ENCODE measurements at regions of chr4 and their contacts with region 1.

Region 1: DNA sequence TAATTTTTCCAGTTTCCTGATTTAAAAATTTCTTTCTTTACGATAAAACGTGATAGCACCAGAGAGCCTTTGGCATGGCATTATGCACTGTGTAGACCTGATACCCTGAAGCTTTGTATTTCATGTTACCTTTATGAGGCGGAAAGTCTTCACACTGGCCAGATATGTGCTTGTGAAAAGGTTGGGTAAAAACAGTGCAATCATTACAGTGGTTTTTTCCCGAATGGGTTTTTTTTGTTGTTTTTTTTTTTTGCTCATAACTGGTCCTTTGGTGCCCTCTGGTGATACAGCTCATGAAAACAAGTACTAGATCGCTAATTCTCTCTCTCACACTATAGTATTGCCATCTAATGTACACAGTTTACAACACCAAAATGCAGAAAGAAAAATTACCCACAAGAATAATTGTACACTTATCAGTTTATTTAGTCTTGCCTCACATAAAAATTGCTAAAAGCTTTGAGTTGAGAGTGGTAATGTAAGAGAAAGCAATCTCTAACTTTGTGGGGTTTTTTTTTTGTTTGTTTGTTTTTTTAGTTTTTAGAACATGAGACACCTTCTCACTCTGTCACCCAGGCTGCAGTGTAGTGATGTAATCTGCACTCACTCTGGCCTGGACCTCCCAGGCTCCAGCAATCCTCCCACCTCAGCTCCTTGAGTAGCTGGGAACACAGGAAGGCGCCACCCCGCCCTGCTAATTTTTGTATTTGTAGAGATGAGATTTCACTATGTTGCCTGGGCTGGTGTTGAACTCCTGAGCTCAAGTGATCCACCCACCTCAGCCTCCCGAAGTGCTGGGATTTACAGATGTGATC is 21.3 kb downstream of the SPCS3 start:
- DNase-seq: peak in 4 of 14 experiments; percentile 35 to 70 (median 53)
- ATAC-seq: peak; percentile 56
- H3K4me3 ChIP-seq: no peak overlapping the region
- H3K4me3 Mint-ChIP-seq: no peak overlapping the region
- H3K27ac ChIP-seq: no peak overlapping the region
- H3K27ac Mint-ChIP-seq: peak overlapping the region; percentile 4
- H3K4me1 ChIP-seq: no peaks in the 10 kb centered on the region
- H3K4me1 Mint-ChIP-seq: peaks cover 10% of the 10 kb centered on the region
- H3K27me3 ChIP-seq: no peaks in the 10 kb centered on the region
- H3K27me3 Mint-ChIP-seq: no peaks in the 10 kb centered on the region
- CTCF ChIP-seq: peak; percentile 81

Region 2: DNA sequence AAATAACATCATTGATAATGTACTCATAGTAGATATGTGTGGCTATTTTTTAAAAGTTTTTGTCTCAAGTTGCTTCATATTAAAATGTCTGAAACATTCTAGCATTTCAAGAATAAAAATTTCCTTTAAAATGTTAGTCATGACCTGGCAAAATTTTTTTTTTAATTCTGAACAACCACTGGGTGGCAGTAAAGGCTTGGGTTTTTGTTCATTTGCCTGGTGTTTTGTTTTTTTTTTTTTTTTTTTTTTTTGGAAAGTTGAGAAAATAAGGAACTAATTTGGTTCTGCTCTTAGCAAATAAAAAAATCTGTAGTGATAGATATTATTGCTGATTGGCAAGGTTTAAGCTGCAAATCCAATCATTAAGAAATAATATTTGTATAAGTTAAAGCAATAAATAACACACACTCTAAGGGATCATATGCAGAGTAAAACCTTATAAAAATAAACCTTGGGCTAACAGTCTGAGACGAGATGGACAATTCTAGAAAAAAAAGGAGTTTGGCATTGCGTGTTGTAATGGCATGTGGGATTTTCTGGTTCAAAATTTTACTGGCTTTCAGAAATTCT is 1976.0 kb before region 1 on chr4:
- CTCF ChIA-PET with region 1: no interaction called
- POLR2A ChIA-PET with region 1: no interaction called
- intact Hi-C with region 1: loop called in 1 of 2 experiments (anchors 10 kb)
- DNase-seq: peak in 4 of 14 experiments; percentile 12 to 56 (median 36)
- ATAC-seq: no peak
- H3K4me3 ChIP-seq: no peak overlapping the region
- H3K4me3 Mint-ChIP-seq: no peak overlapping the region
- H3K27ac ChIP-seq: no peak overlapping the region
- H3K27ac Mint-ChIP-seq: no peak overlapping the region
- H3K4me1 ChIP-seq: no peaks in the 10 kb centered on the region
- H3K4me1 Mint-ChIP-seq: no peaks in the 10 kb centered on the region
- H3K27me3 ChIP-seq: no peaks in the 10 kb centered on the region
- H3K27me3 Mint-ChIP-seq: peaks cover 9% of the 10 kb centered on the region
- CTCF ChIP-seq: peak; percentile 66

Region 3: DNA sequence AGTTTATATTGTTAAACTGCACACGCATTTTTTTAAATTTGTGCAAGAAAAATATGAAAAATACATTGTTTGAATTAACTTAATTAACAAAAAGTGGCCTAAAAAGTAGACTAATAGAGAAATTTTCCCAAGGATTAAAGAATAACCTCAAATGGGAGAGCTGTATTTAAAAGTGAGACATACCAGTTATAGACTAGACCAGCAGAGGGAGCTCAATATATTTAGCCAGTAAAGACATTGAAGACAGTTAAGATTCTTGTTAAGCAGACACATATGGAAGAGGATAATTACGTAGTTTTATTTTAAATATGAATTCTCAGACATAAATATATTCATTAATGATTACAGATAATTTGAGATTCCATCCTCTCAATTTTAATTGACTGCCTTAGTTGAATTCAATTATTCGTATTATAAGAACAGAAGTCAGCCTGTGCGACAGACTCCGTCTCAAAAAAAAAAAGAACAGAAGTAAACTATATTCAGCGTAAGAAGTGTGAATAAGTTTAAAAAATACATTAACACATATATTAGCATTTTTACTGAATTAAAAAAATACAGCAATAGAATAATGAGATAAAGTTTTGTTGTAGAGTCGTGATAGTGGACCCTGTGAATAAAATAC is 1576.9 kb before region 1 on chr4:
- CTCF ChIA-PET with region 1: no interaction called
- POLR2A ChIA-PET with region 1: no interaction called
- intact Hi-C with region 1: loop called in 1 of 2 experiments (anchors 5 kb)
- DNase-seq: peak in 3 of 14 experiments; percentile 1 to 18 (median 11)
- ATAC-seq: no peak
- H3K4me3 ChIP-seq: no peak overlapping the region
- H3K4me3 Mint-ChIP-seq: no peak overlapping the region
- H3K27ac ChIP-seq: no peak overlapping the region
- H3K27ac Mint-ChIP-seq: no peak overlapping the region
- H3K4me1 ChIP-seq: no peaks in the 10 kb centered on the region
- H3K4me1 Mint-ChIP-seq: no peaks in the 10 kb centered on the region
- H3K27me3 ChIP-seq: no peaks in the 10 kb centered on the region
- H3K27me3 Mint-ChIP-seq: no peaks in the 10 kb centered on the region
- CTCF ChIP-seq: peak; percentile 18

Region 4: DNA sequence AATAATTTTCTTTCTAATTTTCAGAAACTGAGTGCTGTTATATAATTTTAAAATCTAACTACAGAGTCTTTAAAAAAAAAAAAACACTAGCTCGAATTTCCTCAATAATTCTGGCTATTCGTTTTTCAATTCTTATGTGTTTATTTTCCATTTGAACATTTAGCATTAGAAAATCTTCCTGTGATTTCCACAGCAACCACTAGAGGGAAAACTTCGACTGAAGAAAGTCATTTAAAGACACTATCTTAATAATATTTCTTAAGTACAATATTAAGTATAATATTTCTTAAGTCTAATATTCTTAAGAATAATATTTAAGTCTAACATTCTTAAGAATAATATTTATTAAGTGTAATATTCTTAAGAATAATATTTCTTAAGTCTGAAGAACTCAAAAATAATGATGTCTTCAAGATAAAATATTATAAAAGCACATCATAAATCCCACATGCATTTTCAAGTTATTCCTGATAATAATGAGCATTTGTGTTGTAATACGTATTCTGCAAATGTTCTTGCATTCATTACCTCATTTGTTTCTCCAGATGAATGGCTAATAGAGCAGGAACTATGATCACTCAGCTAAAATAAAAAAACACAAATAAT is 393.9 kb before region 1 on chr4:
- CTCF ChIA-PET with region 1: interaction called, 3 read pairs
- POLR2A ChIA-PET with region 1: no interaction called
- intact Hi-C with region 1: loop called (anchors 1 to 2 kb)
- DNase-seq: peak in 3 of 14 experiments; percentile 13 to 22 (median 15)
- ATAC-seq: no peak
- H3K4me3 ChIP-seq: no peak overlapping the region
- H3K4me3 Mint-ChIP-seq: no peak overlapping the region
- H3K27ac ChIP-seq: no peak overlapping the region
- H3K27ac Mint-ChIP-seq: no peak overlapping the region
- H3K4me1 ChIP-seq: peaks cover 5% of the 10 kb centered on the region
- H3K4me1 Mint-ChIP-seq: peaks cover 6% of the 10 kb centered on the region
- H3K27me3 ChIP-seq: peaks cover 0 to 3% of the 10 kb centered on the region in 2 experiments
- H3K27me3 Mint-ChIP-seq: peaks cover 21% of the 10 kb centered on the region
- CTCF ChIP-seq: peak; percentile 64

Region 5: DNA sequence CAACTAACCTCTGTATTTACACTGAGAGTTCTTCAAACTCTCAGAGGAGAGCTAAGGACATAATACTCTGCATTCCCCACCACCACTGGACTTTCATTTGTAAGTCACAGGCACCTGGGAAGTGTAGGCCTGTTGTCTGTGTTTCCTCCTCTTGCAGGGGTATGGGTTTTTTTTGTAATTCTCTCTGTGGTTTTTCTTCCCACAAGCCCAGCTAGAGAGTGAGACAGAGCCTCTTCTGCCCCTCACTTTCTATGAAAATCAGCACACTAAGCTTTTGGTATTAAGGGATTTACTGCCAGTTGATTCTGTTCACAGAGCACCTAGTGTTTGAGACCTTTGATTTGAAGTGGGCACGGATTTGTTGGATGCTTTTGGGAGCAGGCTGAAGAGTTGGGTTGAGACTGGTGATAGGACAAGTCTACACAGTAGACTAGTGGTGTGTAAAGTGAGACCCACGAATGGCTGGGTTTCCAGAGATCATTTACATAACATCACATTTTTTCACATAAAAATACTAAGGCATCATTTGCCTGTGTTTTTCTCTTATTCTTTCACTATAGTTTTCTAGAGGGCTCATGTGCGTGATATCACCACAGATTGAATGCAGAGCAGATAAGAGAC is 304.4 kb before region 1 on chr4:
- CTCF ChIA-PET with region 1: no interaction called
- POLR2A ChIA-PET with region 1: no interaction called
- intact Hi-C with region 1: loop called in 1 of 2 experiments (anchors 2 kb)
- DNase-seq: no peak
- ATAC-seq: no peak
- H3K4me3 ChIP-seq: no peak overlapping the region
- H3K4me3 Mint-ChIP-seq: no peak overlapping the region
- H3K27ac ChIP-seq: no peak overlapping the region
- H3K27ac Mint-ChIP-seq: no peak overlapping the region
- H3K4me1 ChIP-seq: no peaks in the 10 kb centered on the region
- H3K4me1 Mint-ChIP-seq: no peaks in the 10 kb centered on the region
- H3K27me3 ChIP-seq: no peaks in the 10 kb centered on the region
- H3K27me3 Mint-ChIP-seq: peaks cover 4% of the 10 kb centered on the region
- CTCF ChIP-seq: no peak

Region 6: DNA sequence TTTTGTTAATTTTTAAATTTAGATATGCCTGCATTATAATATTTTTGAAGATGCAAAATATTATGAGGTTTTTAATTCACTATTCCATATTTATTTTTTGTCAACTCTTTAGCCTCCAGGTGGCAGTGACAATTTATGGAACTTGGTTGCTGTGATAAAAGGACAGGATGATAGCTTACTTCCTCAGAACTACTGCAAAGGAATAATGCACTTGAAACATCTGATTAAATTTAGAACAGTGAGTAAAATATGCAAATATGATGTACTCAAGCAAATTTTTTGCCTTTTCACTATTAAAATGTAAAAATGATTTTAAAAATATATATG is 190.8 kb before region 1 on chr4:
- CTCF ChIA-PET with region 1: interaction called, 4 read pairs
- POLR2A ChIA-PET with region 1: interaction called, 3 read pairs
- intact Hi-C with region 1: loop called (anchors 1 to 5 kb)
- DNase-seq: peak in 3 of 14 experiments; percentile 5 to 22 (median 11)
- ATAC-seq: no peak
- H3K4me3 ChIP-seq: no peak overlapping the region
- H3K4me3 Mint-ChIP-seq: no peak overlapping the region
- H3K27ac ChIP-seq: no peak overlapping the region
- H3K27ac Mint-ChIP-seq: no peak overlapping the region
- H3K4me1 ChIP-seq: no peaks in the 10 kb centered on the region
- H3K4me1 Mint-ChIP-seq: no peaks in the 10 kb centered on the region
- H3K27me3 ChIP-seq: no peaks in the 10 kb centered on the region
- H3K27me3 Mint-ChIP-seq: no peaks in the 10 kb centered on the region
- CTCF ChIP-seq: no peak